ENCODE measurements at regions of chr9 and their contacts with region 1.

Region 1: DNA sequence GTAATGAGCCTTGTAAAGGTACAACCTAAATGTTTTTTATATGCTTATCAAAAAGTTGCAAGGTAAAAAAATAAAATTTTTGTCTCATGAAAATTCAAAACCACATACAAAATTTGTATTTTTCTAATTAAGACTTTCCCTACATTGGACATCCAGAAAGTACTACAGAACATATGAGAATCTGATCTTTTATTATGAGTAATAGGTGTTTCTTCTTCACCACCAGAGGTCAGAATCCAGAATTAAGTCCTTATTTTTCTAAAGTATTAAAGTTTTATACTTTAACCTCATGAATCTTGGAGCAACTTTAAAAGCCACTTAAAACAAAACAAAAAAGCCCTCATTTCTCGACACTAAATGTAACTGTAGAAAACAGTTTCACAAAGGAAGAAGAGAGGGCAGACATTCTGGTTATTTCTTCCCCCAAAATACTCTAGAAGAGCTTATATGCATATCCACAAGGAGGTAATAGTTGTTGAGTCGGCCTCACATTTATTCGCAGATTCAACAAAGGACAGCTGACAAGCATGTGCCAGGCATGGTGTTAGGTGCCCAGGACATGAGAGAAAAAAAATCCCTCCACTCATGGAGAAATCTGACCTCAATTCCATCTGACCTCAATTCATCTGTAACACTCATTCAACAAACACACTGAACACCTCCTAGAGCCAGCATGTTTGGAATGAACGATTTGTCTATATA is 69.3 kb downstream of the MLLT3 start:
- DNase-seq: no peak
- H3K4me3 Mint-ChIP-seq: peak overlapping the region; percentile 1
- H3K27ac Mint-ChIP-seq: peak overlapping the region; percentile 2
- H3K4me1 Mint-ChIP-seq: peaks cover 68% of the 10 kb centered on the region
- H3K27me3 Mint-ChIP-seq: no peaks in the 10 kb centered on the region

Region 2: GRCh38 chr9:20508242-20508641 is 44.8 kb before region 1 on chr9:
- CTCF ChIA-PET with region 1: no interaction called
- intact Hi-C with region 1: loop called (anchors 2 kb)
- DNase-seq: no peak
- H3K4me3 Mint-ChIP-seq: peak overlapping the region; percentile 40
- H3K27ac Mint-ChIP-seq: peak overlapping the region; percentile 13
- H3K4me1 Mint-ChIP-seq: peaks cover 80% of the 10 kb centered on the region
- H3K27me3 Mint-ChIP-seq: no peaks in the 10 kb centered on the region

Region 3: DNA sequence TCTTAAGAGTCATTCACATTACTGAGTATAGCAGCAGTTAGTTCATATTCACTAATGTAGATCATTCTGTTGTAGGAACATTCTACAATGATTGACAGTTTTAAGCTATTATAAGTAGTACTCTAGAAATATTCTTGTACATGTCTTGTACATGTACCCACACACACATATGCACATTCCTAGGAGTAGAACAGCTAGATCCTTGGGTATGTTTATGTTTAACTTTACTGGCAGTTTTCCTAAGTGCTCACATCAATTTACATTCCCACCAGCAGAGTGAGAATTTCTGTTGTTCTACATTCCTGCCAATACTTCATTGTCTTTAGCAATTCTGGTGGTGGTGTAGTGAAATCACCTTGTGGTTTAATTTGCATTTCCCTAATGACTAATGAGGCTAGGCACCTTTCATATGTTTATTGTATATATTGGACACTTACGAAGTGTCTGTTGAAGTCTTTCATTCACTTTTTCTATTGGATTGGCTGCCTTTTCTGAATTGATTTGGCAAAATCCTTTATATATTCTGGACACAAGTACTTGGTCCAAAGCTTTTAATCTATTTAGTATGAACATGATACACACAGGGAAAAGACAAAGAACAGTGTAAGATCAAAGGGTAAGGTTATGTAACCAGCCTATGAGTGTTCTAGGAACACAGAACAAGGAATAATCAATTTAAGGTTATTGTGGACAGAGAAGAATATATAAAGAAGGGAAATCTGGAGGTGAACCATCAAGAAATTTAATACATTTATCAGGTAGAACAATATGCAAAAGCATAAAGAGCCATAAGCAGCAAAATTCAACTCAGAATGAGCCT is 26.3 kb before region 1 on chr9:
- CTCF ChIA-PET with region 1: interaction called, 5 read pairs
- intact Hi-C with region 1: loop called (anchors 2 kb)
- DNase-seq: no peak
- H3K4me3 Mint-ChIP-seq: no peak overlapping the region
- H3K27ac Mint-ChIP-seq: no peak overlapping the region
- H3K4me1 Mint-ChIP-seq: peaks cover 80% of the 10 kb centered on the region
- H3K27me3 Mint-ChIP-seq: no peaks in the 10 kb centered on the region

Region 4: GRCh38 chr9:20614602-20615216 is 61.7 kb after region 1 on chr9:
- CTCF ChIA-PET with region 1: interaction called, 3 read pairs
- intact Hi-C with region 1: loop called (anchors 1 kb)
- DNase-seq: no peak
- H3K4me3 Mint-ChIP-seq: no peak overlapping the region
- H3K27ac Mint-ChIP-seq: peak overlapping the region; percentile 35
- H3K4me1 Mint-ChIP-seq: peaks cover 72% of the 10 kb centered on the region
- H3K27me3 Mint-ChIP-seq: no peaks in the 10 kb centered on the region

Measured in activated naive CD4-positive, alpha-beta T cell treated with anti-CD3 and anti-CD28 coated beads for 36 hours (primary cell).